ENCODE measurements at regions of chr7 and their contacts with region 1.

Region 1: GRCh38 chr7:66740302-66740979 is at the start of gene RABGEF1:
- DNase-seq: peak; percentile 97
- H3K4me3 Mint-ChIP-seq: peak within 1 kb of the TSS; percentile 92
- H3K27ac Mint-ChIP-seq: peak within 1 kb of the TSS; percentile 92
- H3K4me1 Mint-ChIP-seq: peaks cover 47% of the 10 kb centered on the region
- H3K27me3 Mint-ChIP-seq: no peaks in the 10 kb centered on the region
- total RNA-seq, gene RABGEF1: 10.7 to 10.8 TPM

Region 2: DNA sequence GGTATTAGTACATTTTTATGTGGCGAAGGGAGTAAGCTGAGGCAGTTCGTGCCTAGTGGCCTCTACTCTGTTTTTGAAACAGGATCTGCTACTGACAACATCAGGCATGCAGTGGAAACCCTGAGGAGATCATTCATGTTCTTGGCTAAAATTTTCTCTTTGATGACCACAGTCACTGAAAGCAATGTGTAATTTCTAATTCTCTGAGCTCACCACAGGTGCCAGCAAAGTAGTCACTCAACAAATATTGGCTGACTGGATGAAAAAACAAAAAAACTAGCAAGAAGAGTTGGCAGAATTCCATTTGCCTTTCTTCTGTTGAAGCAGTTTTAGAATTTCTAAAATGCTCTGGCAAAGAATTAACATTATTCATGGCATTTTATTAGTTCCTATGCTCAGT is 288.3 kb before region 1 on chr7:
- CTCF ChIA-PET with region 1: no interaction called
- intact Hi-C with region 1: no loop called
- DNase-seq: no peak
- H3K4me3 Mint-ChIP-seq: no peak overlapping the region
- H3K27ac Mint-ChIP-seq: no peak overlapping the region
- H3K4me1 Mint-ChIP-seq: peaks cover 13% of the 10 kb centered on the region
- H3K27me3 Mint-ChIP-seq: no peaks in the 10 kb centered on the region

Region 3: GRCh38 chr7:66591799-66592596 is 148.4 kb before region 1 on chr7:
- CTCF ChIA-PET with region 1: no interaction called
- intact Hi-C with region 1: loop called (anchors 1 kb)
- DNase-seq: peak; percentile 96
- H3K4me3 Mint-ChIP-seq: peak overlapping the region; percentile 98
- H3K27ac Mint-ChIP-seq: peak overlapping the region; percentile 96
- H3K4me1 Mint-ChIP-seq: peaks cover 44% of the 10 kb centered on the region
- H3K27me3 Mint-ChIP-seq: no peaks in the 10 kb centered on the region

Region 4: GRCh38 chr7:66654123-66654732 is 86.2 kb before region 1 on chr7:
- CTCF ChIA-PET with region 1: no interaction called
- intact Hi-C with region 1: loop called (anchors 1 kb)
- DNase-seq: peak; percentile 98
- H3K4me3 Mint-ChIP-seq: peak overlapping the region; percentile 95
- H3K27ac Mint-ChIP-seq: peak overlapping the region; percentile 95
- H3K4me1 Mint-ChIP-seq: peaks cover 30% of the 10 kb centered on the region
- H3K27me3 Mint-ChIP-seq: no peaks in the 10 kb centered on the region

Region 5: GRCh38 chr7:66920769-66921395 is 180.4 kb after region 1 on chr7 and contains the start of gene TMEM248:
- CTCF ChIA-PET with region 1: no interaction called
- intact Hi-C with region 1: loop called (anchors 2 kb)
- DNase-seq: peak; percentile 95
- H3K4me3 Mint-ChIP-seq: peak within 1 kb of the TSS; percentile 100
- H3K27ac Mint-ChIP-seq: peak within 1 kb of the TSS; percentile 96
- H3K4me1 Mint-ChIP-seq: peaks cover 38% of the 10 kb centered on the region
- H3K27me3 Mint-ChIP-seq: no peaks in the 10 kb centered on the region
- total RNA-seq, gene TMEM248: 51.4 to 54.0 TPM